ENCODE measurements at regions of chr3 and their contacts with region 1.

Region 1: GRCh38 chr3:188154014-188154808 is at the start of gene LPP:
- DNase-seq: peak; percentile 92
- H3K4me3 ChIP-seq: peak within 1 kb of the TSS; percentile 68 to 93 (median 84)
- H3K27ac ChIP-seq: peak within 1 kb of the TSS; percentile 95 to 99 (median 98)
- H3K4me1 ChIP-seq: peaks cover 0 to 57% (median 47%) of the 10 kb centered on the region in 4 donors
- H3K27me3 ChIP-seq: no peaks in the 10 kb centered on the region
- CTCF ChIP-seq: no peak
- EP300 ChIP-seq: peak in 3 of 4 donors; percentile 2 to 64 (median 14)
- POLR2A ChIP-seq: no peak
- total RNA-seq, gene LPP: 824 to 1,773 (median 1,187) TPM

Region 2: GRCh38 chr3:188108703-188109412 is 45.4 kb before region 1 on chr3:
- intact Hi-C with region 1: no loop called
- DNase-seq: no peak
- H3K4me3 ChIP-seq: no peak overlapping the region
- H3K27ac ChIP-seq: no peak overlapping the region
- H3K4me1 ChIP-seq: no peaks in the 10 kb centered on the region
- H3K27me3 ChIP-seq: no peaks in the 10 kb centered on the region
- CTCF ChIP-seq: no peak
- EP300 ChIP-seq: no peak
- POLR2A ChIP-seq: no peak

Region 3: DNA sequence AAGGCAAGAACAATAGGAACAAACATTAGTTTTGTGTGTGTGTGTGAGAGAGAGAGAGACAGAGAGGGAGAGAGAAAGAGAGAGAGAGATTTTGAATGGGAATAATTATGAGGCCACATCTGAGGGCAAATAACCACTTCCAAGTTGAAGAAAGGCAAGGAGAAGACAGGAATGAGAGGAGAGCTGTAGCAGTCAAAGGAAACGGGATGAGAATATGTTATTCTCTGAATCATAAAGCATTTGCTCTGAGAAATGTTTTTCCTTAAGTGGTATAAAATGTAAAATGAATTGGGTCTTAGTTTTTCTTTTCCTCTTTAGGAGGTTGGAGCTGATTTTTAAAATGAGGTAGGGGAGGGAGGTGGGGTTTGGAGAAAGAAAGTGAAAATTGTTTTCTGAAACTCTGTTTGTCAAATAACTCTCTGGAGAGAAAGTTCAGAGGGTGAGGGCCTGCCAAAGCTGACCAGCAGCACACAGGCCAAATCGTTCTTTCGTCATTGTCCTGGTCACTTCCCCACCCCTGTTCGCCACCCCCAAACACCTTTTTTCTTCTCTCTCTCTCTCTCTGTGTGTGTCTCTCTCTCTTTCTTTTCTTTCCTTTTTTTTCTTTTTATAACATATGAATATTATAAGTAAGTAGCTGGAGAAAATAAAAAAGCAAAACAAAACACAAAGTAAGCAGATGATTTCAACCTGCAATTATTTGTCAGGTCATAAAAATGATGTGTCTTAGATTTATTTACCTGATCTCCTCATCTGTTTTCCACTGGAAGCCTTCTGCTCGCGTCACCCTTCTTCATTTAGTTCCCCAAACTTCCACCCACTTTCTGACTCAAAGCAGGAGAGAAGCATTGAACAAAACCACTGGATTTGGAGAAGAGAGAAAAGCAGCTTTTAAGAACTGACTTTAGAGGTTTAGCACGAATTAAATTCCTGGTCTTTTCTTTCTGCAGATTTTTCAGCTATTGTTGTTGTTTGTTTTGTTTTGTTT is 110.3 kb after region 1 on chr3:
- intact Hi-C with region 1: loop called (anchors 2 kb)
- DNase-seq: peak; percentile 85
- H3K4me3 ChIP-seq: no peak overlapping the region
- H3K27ac ChIP-seq: peak overlapping the region; percentile 88 to 94 (median 90)
- H3K4me1 ChIP-seq: peaks cover 0 to 98% (median 97%) of the 10 kb centered on the region in 4 donors
- H3K27me3 ChIP-seq: no peaks in the 10 kb centered on the region
- CTCF ChIP-seq: no peak
- EP300 ChIP-seq: peak in 2 of 4 donors; percentile 14 to 33
- POLR2A ChIP-seq: no peak

Region 4: DNA sequence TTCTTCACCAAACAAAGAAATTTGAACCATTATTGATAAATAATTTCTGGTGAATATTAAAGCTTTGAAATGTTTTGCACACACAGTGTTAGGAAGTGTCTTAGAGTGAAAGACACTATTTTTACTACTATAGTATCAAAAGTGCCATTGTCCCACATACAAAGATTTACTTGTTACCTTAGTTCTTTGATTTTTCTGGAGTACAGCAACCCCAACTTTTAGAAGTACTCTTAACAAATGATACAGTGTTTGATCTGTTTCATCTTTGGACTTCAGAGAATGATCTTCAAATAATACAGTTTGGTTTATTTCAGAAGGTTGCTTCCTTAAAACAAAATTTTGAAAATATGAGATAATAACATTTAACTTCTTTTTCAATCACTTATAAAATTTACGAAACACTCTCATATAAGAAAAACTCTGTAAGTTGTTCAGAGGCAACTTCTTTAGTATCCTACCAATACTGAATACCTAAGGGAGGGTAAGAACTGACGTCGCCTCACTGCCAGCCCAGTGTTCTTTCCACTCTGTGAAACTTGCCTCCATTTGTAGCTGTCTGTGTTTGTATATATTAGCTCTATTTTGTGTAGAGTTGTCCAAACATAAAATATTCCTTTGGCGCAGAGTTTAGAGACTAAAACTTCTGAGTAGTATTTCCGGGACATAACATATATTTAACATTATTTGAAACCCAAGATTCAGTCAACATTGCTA is 463.9 kb after region 1 on chr3:
- intact Hi-C with region 1: no loop called
- DNase-seq: no peak
- H3K4me3 ChIP-seq: no peak overlapping the region
- H3K27ac ChIP-seq: peak overlapping the region in 3 of 4 donors; percentile 8 to 55 (median 44)
- H3K4me1 ChIP-seq: peaks cover 0 to 31% (median 16%) of the 10 kb centered on the region in 4 donors
- H3K27me3 ChIP-seq: no peaks in the 10 kb centered on the region
- CTCF ChIP-seq: no peak
- EP300 ChIP-seq: peak in 1 of 4 donors; percentile 18
- POLR2A ChIP-seq: no peak